ENCODE measurements at regions of chr2 and their contacts with region 1.

Region 1: GRCh38 chr2:231411831-231412617 is 16.5 kb downstream of the B3GNT7 start:
- DNase-seq: peak; percentile 69
- H3K4me3 Mint-ChIP-seq: no peak overlapping the region
- H3K27ac Mint-ChIP-seq: no peak overlapping the region
- H3K4me1 Mint-ChIP-seq: peaks cover 10% of the 10 kb centered on the region
- H3K27me3 Mint-ChIP-seq: peaks cover 72% of the 10 kb centered on the region

Region 2: GRCh38 chr2:231104115-231104713 is 307.8 kb before region 1 on chr2:
- CTCF ChIA-PET with region 1: interaction called, 13 read pairs
- DNase-seq: peak; percentile 73
- H3K4me3 Mint-ChIP-seq: no peak overlapping the region
- H3K27ac Mint-ChIP-seq: no peak overlapping the region
- H3K4me1 Mint-ChIP-seq: no peaks in the 10 kb centered on the region
- H3K27me3 Mint-ChIP-seq: no peaks in the 10 kb centered on the region

Region 3: DNA sequence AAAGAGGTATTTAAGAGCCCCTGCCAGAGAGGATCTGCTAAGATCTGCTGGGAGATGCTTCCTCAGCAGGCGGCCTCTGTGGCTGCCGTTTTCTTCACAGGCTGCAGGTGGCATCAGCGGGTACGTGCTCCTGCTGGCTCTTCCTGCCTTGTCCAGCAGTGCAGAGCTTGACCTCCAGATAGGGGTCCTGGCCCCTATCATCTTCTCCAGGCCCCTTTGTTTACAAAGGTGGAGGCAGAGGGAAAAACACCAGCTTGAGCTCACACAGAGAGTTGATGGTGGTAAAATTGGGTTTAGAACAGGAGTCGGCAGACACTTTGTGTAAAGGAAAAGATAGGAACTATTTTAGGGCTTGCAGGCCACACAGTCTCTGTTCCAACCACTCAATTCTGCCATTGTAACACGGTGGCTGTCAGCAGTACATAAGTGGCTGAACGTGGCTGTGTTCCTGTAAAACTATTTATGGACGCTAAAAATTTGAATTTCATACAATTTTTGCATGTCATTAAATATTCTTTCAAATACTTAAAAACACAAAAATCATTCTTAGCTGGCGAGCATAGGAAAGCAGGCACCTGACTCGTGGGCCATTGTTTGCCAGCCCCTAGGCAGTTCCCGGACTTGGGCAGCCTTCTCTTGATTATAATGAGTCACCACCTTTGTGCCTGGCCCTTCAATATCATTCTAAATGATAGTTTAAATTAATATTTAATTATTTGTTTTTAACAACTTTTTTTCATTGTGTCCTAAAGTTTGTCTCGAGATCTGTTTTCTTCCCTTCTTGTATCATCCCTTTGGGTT is 114.7 kb before region 1 on chr2:
- CTCF ChIA-PET with region 1: interaction called, 15 read pairs
- DNase-seq: peak; percentile 45
- H3K4me3 Mint-ChIP-seq: no peak overlapping the region
- H3K27ac Mint-ChIP-seq: no peak overlapping the region
- H3K4me1 Mint-ChIP-seq: peaks cover 5% of the 10 kb centered on the region
- H3K27me3 Mint-ChIP-seq: peaks cover 6% of the 10 kb centered on the region

Region 4: GRCh38 chr2:231433990-231434389 is 22.0 kb after region 1 on chr2:
- CTCF ChIA-PET with region 1: no interaction called
- DNase-seq: no peak
- H3K4me3 Mint-ChIP-seq: no peak overlapping the region
- H3K27ac Mint-ChIP-seq: no peak overlapping the region
- H3K4me1 Mint-ChIP-seq: peaks cover 7% of the 10 kb centered on the region
- H3K27me3 Mint-ChIP-seq: no peaks in the 10 kb centered on the region

Region 5: GRCh38 chr2:231642631-231643494 is 230.8 kb after region 1 on chr2:
- CTCF ChIA-PET with region 1: no interaction called
- DNase-seq: peak; percentile 72
- H3K4me3 Mint-ChIP-seq: peak overlapping the region; percentile 64
- H3K27ac Mint-ChIP-seq: peak overlapping the region; percentile 88
- H3K4me1 Mint-ChIP-seq: peaks cover 32% of the 10 kb centered on the region
- H3K27me3 Mint-ChIP-seq: peaks cover 25% of the 10 kb centered on the region